Heart left ventricle (tissue), 16 donors: ENCODE measurements at regions of chr7 and their contacts with region 1.

Region 1: DNA sequence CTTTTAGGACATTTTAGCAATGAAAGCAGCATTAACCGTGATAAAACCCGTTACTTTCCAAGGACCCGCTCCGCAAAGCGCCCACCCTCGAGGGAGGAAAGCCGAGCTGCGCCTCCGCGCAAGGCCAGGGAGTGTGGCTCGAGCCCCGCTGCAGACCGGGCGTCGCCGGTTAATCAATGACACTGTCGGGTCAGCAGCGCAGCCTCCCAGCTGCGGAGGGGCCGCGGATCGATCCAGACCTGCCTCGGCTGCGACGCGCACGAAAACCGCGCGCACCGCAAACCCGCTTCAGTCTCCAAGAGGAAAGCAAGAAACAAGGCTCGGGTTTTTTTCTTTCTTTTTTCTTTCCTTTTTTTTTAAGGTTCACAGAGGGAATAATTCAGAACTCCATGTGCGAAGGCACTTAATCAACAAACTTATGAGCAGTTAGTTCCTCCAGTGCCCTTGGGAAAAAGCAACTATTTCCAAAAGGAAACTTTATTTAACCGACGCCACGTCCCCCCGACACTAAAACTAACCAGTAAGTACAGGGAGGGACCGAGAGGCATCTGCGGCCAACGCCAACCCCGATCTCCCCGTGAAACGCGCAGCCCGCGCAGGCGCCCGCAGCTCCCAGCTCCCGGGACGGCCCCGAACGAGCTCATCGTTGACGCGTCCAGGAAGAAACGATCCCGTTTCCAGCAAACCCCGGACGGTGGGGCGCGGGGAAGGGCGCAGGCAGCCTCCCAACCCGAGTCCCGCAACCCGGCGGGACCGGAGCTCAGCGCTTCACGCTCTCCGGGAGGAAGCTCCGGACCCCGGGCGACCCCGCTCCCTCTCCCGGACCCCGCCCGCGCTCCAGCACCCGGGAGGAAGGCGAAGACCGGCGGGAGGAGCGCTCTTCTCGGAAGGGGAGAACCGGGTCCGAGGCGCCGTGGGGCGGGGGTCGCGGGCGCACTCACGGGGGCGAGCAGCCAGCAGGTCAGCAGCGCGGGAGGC is 598 bp downstream of the VIPR2 start:
- DNase-seq: peak in 4 of 5 donors; percentile 36 to 77 (median 58)
- ATAC-seq: peak in 3 of 4 donors; percentile 47 to 56 (median 47)
- H3K4me3 ChIP-seq: peak overlapping the region; percentile 62 to 91 (median 74)
- H3K27ac ChIP-seq: peak overlapping the region in 9 of 12 donors; percentile 6 to 83 (median 70)
- H3K4me1 ChIP-seq: peaks cover 0 to 43% (median 16%) of the 10 kb centered on the region in 12 donors
- H3K27me3 ChIP-seq: peaks cover 0 to 42% (median 7%) of the 10 kb centered on the region in 9 donors
- CTCF ChIP-seq: no peak
- POLR2A ChIP-seq: no peak

Region 2: DNA sequence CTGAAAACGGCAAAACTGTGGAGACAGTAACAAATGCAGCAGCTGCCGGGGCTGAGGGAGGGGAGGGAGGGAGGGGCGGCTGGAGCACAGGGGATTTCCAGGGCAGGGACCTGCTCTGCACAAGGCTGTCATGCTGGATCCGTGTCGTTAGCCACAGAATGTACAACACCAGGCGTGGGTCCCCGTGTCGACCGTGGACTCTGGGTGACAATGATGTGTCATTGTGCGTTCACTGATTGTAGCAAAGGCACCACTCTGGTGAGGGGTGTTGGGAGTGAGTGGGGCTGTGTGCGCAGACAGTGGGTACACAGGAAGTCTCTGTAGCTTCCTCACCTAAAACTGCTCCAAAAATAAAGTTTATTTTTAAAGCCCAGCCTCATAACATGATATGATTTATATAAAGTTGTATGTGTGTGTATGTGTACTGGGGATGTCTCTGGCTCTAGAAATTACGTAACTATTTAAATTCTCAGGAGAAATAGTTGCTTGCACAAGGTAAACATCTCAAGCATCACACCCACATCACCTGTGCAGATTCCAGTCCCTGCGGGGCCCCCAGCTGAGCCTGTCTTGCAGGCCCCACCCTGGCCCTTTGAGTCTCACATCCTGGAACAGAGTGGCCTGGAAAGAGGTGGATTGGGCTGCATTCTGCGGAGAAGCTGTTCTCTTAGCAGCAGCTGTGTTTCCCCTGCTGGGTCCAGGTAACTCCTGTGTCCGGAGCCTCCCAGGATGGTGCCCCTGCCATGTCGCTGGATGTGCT is 152.1 kb before region 1 on chr7:
- intact Hi-C with region 1: no loop called
- DNase-seq: no peak
- ATAC-seq: no peak
- H3K4me3 ChIP-seq: no peak overlapping the region
- H3K27ac ChIP-seq: no peak overlapping the region
- H3K4me1 ChIP-seq: no peaks in the 10 kb centered on the region
- H3K27me3 ChIP-seq: peaks cover 0 to 76% (median 35%) of the 10 kb centered on the region in 9 donors
- CTCF ChIP-seq: no peak
- POLR2A ChIP-seq: no peak

Region 3: GRCh38 chr7:159012353-159013069 is 131.6 kb before region 1 on chr7:
- intact Hi-C with region 1: loop called in 1 of 10 experiments (anchors 5 kb)
- DNase-seq: peak; percentile 75 to 88 (median 82)
- ATAC-seq: peak; percentile 50 to 80 (median 55)
- H3K4me3 ChIP-seq: no peak overlapping the region
- H3K27ac ChIP-seq: peak overlapping the region; percentile 63 to 93 (median 82)
- H3K4me1 ChIP-seq: peaks cover 0 to 41% (median 22%) of the 10 kb centered on the region in 12 donors
- H3K27me3 ChIP-seq: no peaks in the 10 kb centered on the region
- CTCF ChIP-seq: no peak
- POLR2A ChIP-seq: no peak

Region 4: GRCh38 chr7:159030490-159031134 is 113.5 kb before region 1 on chr7:
- intact Hi-C with region 1: loop called in 3 of 10 experiments (anchors 5 to 10 kb)
- DNase-seq: peak; percentile 57 to 76 (median 65)
- ATAC-seq: peak; percentile 65 to 74 (median 70)
- H3K4me3 ChIP-seq: peak overlapping the region; percentile 31 to 68 (median 54)
- H3K27ac ChIP-seq: peak overlapping the region; percentile 13 to 86 (median 71)
- H3K4me1 ChIP-seq: peaks cover 0 to 28% (median 10%) of the 10 kb centered on the region in 12 donors
- H3K27me3 ChIP-seq: peaks cover 0 to 8% (median 0%) of the 10 kb centered on the region in 9 donors
- CTCF ChIP-seq: peak in 11 of 12 donors; percentile 17 to 51 (median 34)
- POLR2A ChIP-seq: no peak

Region 5: DNA sequence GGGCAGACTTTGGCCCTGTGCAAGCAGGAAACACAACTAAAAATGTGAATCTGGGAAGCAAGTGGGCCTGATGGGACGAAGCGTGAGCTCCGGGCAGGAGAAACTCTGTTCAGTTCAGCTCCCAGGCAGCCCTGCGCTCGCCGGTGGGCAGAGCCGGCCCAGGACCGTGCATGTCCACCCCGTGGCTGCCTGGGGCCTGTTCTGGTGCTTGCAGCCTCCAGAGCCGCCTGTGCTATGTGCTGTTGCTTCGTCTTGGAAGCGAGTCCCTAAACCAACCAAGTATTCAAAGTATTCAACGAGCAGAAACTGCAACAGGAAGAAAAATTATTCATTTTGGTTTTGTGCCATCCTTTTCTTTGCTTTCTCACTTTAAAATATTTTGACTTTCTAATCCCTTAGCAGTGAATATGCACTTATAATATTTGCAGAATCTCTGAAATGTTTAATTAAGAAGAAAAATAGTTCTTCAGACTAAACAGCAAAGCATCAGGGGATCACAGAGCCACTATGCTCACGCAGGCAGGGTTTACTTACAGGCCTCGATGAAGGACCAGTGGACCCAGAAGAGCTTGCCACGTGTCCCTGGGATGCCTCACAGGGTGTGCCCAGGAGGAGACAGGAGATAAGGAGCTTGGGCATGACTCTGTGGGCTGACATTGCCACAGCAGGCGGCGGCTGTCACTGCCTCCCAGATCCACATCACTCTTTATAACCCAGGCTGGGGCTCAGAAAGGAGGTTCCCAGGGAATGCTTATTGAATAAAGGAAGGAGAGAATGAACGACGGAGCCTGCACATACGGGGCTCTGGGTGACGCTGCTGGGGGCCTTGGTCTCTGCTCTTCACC is 45.0 kb before region 1 on chr7:
- intact Hi-C with region 1: loop called in 5 of 10 experiments (anchors 5 kb)
- DNase-seq: peak in 4 of 5 donors; percentile 32 to 77 (median 54)
- ATAC-seq: peak in 2 of 4 donors; percentile 10 to 15
- H3K4me3 ChIP-seq: no peak overlapping the region
- H3K27ac ChIP-seq: peak overlapping the region; percentile 72 to 99 (median 94)
- H3K4me1 ChIP-seq: peaks cover 0 to 54% (median 37%) of the 10 kb centered on the region in 12 donors
- H3K27me3 ChIP-seq: no peaks in the 10 kb centered on the region
- CTCF ChIP-seq: peak in 3 of 12 donors; percentile 6 to 36 (median 18)
- POLR2A ChIP-seq: no peak

Region 6: GRCh38 chr7:159195946-159196345 is 51.9 kb after region 1 on chr7:
- intact Hi-C with region 1: no loop called
- DNase-seq: no peak
- ATAC-seq: no peak
- H3K4me3 ChIP-seq: no peak overlapping the region
- H3K27ac ChIP-seq: peak overlapping the region in 2 of 12 donors; percentile 18 to 87
- H3K4me1 ChIP-seq: peaks cover 0 to 29% (median 4%) of the 10 kb centered on the region in 12 donors
- H3K27me3 ChIP-seq: peaks cover 0 to 11% (median 0%) of the 10 kb centered on the region in 9 donors
- CTCF ChIP-seq: no peak
- POLR2A ChIP-seq: no peak